Activated CD8-positive, alpha-beta T cell treated with anti-CD3 and anti-CD28 coated beads for 36 hours (primary cell): ENCODE measurements at regions of chr16 and their contacts with region 1.

Region 1: GRCh38 chr16:1363501-1364041 is 11.8 kb downstream of the GNPTG start:
- DNase-seq: peak; percentile 82
- ATAC-seq: peak; percentile 99
- H3K4me3 Mint-ChIP-seq: no peak overlapping the region
- H3K27ac Mint-ChIP-seq: peak overlapping the region; percentile 59
- H3K4me1 Mint-ChIP-seq: peaks cover 2% of the 10 kb centered on the region
- H3K27me3 Mint-ChIP-seq: no peaks in the 10 kb centered on the region
- CTCF ChIP-seq: peak; percentile 79

Region 2: DNA sequence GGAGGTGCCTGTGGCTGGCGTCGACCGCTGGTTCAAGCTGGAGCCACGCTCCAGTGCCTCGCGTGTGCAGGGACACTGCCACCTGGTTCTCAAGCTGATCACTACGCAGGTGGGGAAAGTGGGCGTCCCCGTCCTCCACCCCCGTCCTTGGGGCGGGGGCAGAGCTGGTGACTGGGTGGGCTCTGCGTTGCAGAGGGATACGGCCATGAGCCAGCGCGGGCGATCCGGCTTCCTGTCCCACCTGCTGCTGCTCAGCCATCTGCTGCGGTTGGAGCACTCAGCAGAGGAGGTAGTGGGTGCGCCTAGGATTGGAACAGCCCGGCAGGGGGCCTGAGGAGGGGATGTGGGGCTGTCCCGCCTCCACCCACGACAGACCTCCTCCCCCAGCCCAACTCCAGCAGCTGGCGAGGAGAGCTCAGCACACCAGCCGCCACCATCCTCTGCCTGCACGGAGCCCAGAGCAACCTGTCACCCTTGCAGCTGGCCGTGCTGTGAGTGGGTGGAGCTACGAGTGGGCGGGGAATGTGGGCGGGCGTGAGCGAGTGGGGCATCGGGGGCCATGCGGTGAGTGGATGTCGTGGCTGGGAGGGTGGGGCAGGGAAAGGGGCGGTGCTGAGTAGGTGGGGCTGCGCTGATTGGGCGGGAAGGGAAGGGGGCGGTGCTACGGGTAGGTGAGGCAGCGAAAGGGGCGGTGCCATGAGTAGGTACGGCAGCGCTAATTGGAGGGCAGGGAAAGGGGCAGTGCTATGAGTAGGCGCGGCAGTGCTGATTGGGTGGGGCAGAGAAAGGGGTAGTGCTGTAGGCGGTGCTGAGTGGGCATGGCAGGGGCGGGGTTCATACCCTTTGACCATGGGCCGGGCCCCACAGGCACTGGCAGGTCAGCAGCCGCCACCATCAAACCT is 20.8 kb before region 1 on chr16:
- CTCF ChIA-PET with region 1: interaction called, 10 read pairs
- POLR2A ChIA-PET with region 1: no interaction called
- intact Hi-C with region 1: no loop called
- DNase-seq: peak; percentile 96
- ATAC-seq: peak; percentile 94
- H3K4me3 Mint-ChIP-seq: peak overlapping the region; percentile 38
- H3K27ac Mint-ChIP-seq: no peak overlapping the region
- H3K4me1 Mint-ChIP-seq: peaks cover 18% of the 10 kb centered on the region
- H3K27me3 Mint-ChIP-seq: no peaks in the 10 kb centered on the region
- CTCF ChIP-seq: no peak

Region 3: GRCh38 chr16:1351582-1352362 is 11.8 kb before region 1 on chr16 and contains the starts of genes GNPTG and TSR3:
- CTCF ChIA-PET with region 1: interaction called, 15 read pairs
- POLR2A ChIA-PET with region 1: no interaction called
- intact Hi-C with region 1: no loop called
- DNase-seq: peak; percentile 84
- ATAC-seq: peak; percentile 93
- H3K4me3 Mint-ChIP-seq: peak within 1 kb of the TSS; percentile 77
- H3K27ac Mint-ChIP-seq: peak within 1 kb of the TSS; percentile 78
- H3K4me1 Mint-ChIP-seq: peaks cover 29% of the 10 kb centered on the region
- H3K27me3 Mint-ChIP-seq: no peaks in the 10 kb centered on the region
- CTCF ChIP-seq: no peak
- total RNA-seq, gene GNPTG: 17.3 to 19.2 TPM
- total RNA-seq, gene TSR3: 54.7 to 57.4 TPM

Region 4: DNA sequence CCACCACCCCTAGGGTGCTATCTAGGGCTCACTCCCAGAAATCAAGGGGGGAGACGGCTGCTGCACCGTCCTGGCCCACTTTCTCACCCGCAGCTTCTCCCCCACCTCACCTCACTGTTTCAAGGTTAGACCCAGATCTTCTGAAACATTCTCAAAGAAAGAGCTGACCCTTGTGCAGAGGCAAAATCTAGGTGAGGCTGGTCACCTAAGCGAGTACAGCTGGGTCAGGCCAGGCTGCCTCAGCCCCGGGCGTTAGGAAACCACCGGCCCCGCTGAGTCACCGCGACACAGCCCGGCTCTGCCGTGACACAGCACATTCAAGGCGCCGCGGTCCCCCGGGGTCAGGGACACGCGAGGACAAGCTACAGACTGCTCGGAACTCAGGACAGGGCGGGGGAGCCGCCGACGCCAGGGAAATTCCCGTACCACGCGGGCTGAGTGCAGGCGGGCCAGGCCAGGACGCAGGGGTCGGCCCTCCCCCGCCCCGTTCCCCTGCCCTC is 15.3 kb after region 1 on chr16:
- CTCF ChIA-PET with region 1: interaction called, 36 read pairs
- POLR2A ChIA-PET with region 1: interaction called, 17 read pairs
- intact Hi-C with region 1: no loop called
- DNase-seq: peak; percentile 82
- ATAC-seq: peak; percentile 66
- H3K4me3 Mint-ChIP-seq: peak overlapping the region; percentile 87
- H3K27ac Mint-ChIP-seq: peak overlapping the region; percentile 92
- H3K4me1 Mint-ChIP-seq: peaks cover 13% of the 10 kb centered on the region
- H3K27me3 Mint-ChIP-seq: no peaks in the 10 kb centered on the region
- CTCF ChIP-seq: no peak

Region 5: GRCh38 chr16:1420111-1420540 is 56.6 kb after region 1 on chr16:
- CTCF ChIA-PET with region 1: interaction called, 10 read pairs
- POLR2A ChIA-PET with region 1: interaction called, 5 read pairs
- intact Hi-C with region 1: no loop called
- DNase-seq: peak; percentile 18
- ATAC-seq: no peak
- H3K4me3 Mint-ChIP-seq: peak overlapping the region; percentile 83
- H3K27ac Mint-ChIP-seq: peak overlapping the region; percentile 97
- H3K4me1 Mint-ChIP-seq: peaks cover 30% of the 10 kb centered on the region
- H3K27me3 Mint-ChIP-seq: no peaks in the 10 kb centered on the region
- CTCF ChIP-seq: no peak